ENCODE measurements at regions of chr12 and their contacts with region 1.

Region 1: GRCh38 chr12:76547526-76547925 is 12.0 kb downstream of the OSBPL8 start:
- DNase-seq: no peak
- ATAC-seq: no peak
- H3K4me3 ChIP-seq: no peak overlapping the region
- H3K4me3 Mint-ChIP-seq: no peak overlapping the region
- H3K27ac ChIP-seq: no peak overlapping the region
- H3K27ac Mint-ChIP-seq: no peak overlapping the region
- H3K4me1 ChIP-seq: peaks cover 30 to 49% of the 10 kb centered on the region in 2 donors
- H3K4me1 Mint-ChIP-seq: peaks cover 74% of the 10 kb centered on the region
- H3K27me3 ChIP-seq: no peaks in the 10 kb centered on the region
- H3K27me3 Mint-ChIP-seq: no peaks in the 10 kb centered on the region
- CTCF ChIP-seq: no peak

Region 2: DNA sequence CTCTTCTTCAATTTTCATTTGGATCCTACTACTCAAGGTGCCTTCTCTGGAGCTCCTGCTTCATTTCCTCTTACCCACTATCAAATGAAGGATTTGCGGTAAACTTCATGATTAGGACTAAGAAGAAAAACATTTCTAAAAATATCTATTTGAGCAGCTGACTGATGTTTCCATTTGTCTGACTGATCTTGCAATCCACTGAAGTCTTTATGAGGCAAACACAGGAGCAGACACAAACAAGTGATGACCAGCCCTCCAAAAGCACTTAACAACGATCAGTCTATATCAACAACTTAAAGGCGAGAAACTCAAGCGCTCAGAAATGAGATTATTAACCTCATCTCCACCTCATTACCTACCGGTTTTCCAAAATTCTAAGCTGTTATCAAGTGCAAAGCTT is 14.2 kb before region 1 on chr12:
- CTCF ChIA-PET with region 1: no interaction called
- POLR2A ChIA-PET with region 1: no interaction called
- intact Hi-C with region 1: loop called (anchors 2 kb)
- DNase-seq: no peak
- ATAC-seq: no peak
- H3K4me3 ChIP-seq: no peak overlapping the region
- H3K4me3 Mint-ChIP-seq: no peak overlapping the region
- H3K27ac ChIP-seq: no peak overlapping the region
- H3K27ac Mint-ChIP-seq: no peak overlapping the region
- H3K4me1 ChIP-seq: no peaks in the 10 kb centered on the region
- H3K4me1 Mint-ChIP-seq: peaks cover 39% of the 10 kb centered on the region
- H3K27me3 ChIP-seq: no peaks in the 10 kb centered on the region
- H3K27me3 Mint-ChIP-seq: no peaks in the 10 kb centered on the region
- CTCF ChIP-seq: no peak

Region 3: DNA sequence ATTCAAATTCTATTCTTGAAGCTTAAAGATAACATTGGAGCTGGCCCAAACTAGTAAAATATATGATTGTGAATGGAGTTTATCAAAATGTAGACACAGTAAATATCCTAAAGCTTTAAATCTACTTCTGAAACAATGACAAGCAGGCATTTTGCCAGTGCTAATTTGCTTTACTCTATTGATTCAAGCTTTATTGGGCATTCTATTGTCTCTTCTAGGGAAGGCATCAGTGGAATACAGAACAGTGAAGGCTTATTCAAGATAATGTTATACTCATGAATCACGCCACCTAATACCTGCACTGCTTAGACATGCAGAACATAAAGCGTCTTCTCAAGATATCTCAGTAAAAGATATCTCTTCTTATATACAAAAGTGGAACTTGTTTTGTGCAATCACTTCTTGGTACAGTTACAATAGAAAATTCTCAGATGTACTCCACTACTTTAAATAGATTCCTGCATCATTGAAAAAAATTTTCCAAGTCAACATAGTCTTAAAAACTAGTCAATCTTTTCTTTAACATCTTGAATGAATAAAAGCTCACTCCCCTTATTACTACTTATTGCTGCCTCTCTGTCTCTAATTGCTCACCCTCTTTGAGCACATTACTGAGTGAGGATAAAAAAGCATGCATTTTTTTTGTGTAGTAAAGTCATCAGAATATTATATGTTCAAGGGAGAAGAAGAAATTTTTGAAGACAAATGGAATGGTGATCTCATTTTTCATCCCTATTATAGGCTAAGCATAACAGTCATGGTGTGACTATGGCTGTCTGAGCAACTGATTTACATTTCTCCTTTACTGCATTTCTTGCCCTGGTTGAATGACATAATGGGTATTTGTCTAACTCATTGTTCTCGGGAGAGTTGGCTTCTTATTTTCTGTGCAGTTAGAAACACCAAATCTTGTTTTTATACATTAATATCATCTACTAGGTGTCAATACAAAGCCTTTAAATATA is 615.8 kb after region 1 on chr12:
- CTCF ChIA-PET with region 1: no interaction called
- POLR2A ChIA-PET with region 1: no interaction called
- intact Hi-C with region 1: no loop called
- DNase-seq: no peak
- ATAC-seq: no peak
- H3K4me3 ChIP-seq: no peak overlapping the region
- H3K4me3 Mint-ChIP-seq: no peak overlapping the region
- H3K27ac ChIP-seq: no peak overlapping the region
- H3K27ac Mint-ChIP-seq: no peak overlapping the region
- H3K4me1 ChIP-seq: no peaks in the 10 kb centered on the region
- H3K4me1 Mint-ChIP-seq: no peaks in the 10 kb centered on the region
- H3K27me3 ChIP-seq: no peaks in the 10 kb centered on the region
- H3K27me3 Mint-ChIP-seq: no peaks in the 10 kb centered on the region
- CTCF ChIP-seq: no peak

Measured in B cell (primary cell).